Naive thymus-derived CD4-positive, alpha-beta T cell (primary cell): ENCODE measurements at regions of chr1 and their contacts with region 1.

Region 1: DNA sequence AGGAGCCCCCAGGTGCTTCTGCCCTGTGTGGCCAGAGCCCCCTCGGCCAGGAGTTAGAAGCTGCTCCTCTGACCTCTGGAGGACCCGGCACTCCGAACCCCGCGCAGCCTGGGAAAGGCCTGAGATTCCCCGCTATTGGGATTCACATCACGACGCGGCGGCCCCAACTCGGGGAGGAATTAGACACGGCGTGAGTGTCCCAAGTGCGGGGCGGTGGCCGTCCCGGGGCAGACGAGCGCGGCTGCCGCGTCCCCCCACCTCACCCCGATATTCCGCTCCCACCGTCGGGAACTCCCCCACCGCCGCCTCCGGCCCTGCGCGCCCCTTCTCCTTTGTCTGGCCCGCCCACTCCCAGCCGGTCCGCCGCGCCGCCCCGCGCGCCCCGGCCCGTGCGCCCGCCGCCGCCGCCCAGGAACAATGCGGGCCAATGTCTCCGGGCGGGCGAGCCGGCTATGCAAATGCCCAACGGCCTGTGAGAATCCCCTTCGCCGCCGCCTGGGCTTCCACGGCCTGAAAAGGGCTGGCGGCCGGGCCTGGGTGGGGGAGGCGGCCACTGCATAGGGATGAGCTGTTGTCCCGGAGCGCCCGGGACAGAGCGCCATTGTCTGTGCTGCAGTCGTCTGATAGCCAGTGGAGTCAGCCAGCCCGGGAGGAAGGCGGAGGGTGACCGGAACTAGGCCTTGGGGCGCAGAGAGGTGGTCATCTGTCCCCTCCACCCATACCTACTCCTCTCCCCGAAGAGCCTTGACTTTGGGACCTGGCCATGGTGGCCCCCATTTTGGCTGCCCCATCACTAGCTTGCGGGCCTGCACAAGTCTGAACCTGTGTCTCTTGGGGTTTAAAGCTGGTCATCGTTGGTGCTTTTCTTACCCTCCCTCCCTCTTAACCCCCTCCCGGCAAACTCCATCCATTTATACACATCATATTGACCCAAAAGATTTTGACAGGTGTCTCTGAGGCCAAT is 19.4 kb downstream of the RHBG start:
- DNase-seq: no peak
- ATAC-seq: no peak
- H3K4me3 ChIP-seq: no peak overlapping the region
- H3K4me3 Mint-ChIP-seq: peak overlapping the region in 1 of 10 donors; percentile 48
- H3K27ac ChIP-seq: no peak overlapping the region
- H3K27ac Mint-ChIP-seq: no peak overlapping the region
- H3K4me1 ChIP-seq: peaks cover 6 to 8% of the 10 kb centered on the region in 2 donors
- H3K4me1 Mint-ChIP-seq: peaks cover 5 to 7% (median 6%) of the 10 kb centered on the region in 7 donors
- H3K27me3 ChIP-seq: peaks cover 0 to 3% of the 10 kb centered on the region in 2 donors
- H3K27me3 Mint-ChIP-seq: peaks cover 15 to 44% (median 26%) of the 10 kb centered on the region in 5 donors

Region 2: GRCh38 chr1:156245451-156246232 is 142.8 kb before region 1 on chr1:
- CTCF ChIA-PET with region 1: no interaction called
- POLR2A ChIA-PET with region 1: no interaction called
- intact Hi-C with region 1: no loop called
- DNase-seq: peak in 7 of 9 donors; percentile 26 to 45 (median 31)
- ATAC-seq: peak; percentile 67
- H3K4me3 ChIP-seq: peak overlapping the region; percentile 55
- H3K4me3 Mint-ChIP-seq: peak overlapping the region; percentile 78 to 90 (median 86)
- H3K27ac ChIP-seq: no peak overlapping the region
- H3K27ac Mint-ChIP-seq: peak overlapping the region; percentile 25 to 73 (median 56)
- H3K4me1 ChIP-seq: peaks cover 8 to 10% of the 10 kb centered on the region in 2 donors
- H3K4me1 Mint-ChIP-seq: peaks cover 0 to 24% (median 18%) of the 10 kb centered on the region in 7 donors
- H3K27me3 ChIP-seq: no peaks in the 10 kb centered on the region
- H3K27me3 Mint-ChIP-seq: peaks cover 0 to 6% (median 0%) of the 10 kb centered on the region in 5 donors

Region 3: GRCh38 chr1:156409439-156409838 is 21.0 kb after region 1 on chr1:
- CTCF ChIA-PET with region 1: interaction called, 6 read pairs
- POLR2A ChIA-PET with region 1: no interaction called
- intact Hi-C with region 1: loop called in 1 of 2 experiments (anchors 2 kb)
- DNase-seq: no peak
- ATAC-seq: no peak
- H3K4me3 ChIP-seq: no peak overlapping the region
- H3K4me3 Mint-ChIP-seq: no peak overlapping the region
- H3K27ac ChIP-seq: no peak overlapping the region
- H3K27ac Mint-ChIP-seq: no peak overlapping the region
- H3K4me1 ChIP-seq: no peaks in the 10 kb centered on the region
- H3K4me1 Mint-ChIP-seq: no peaks in the 10 kb centered on the region
- H3K27me3 ChIP-seq: no peaks in the 10 kb centered on the region
- H3K27me3 Mint-ChIP-seq: peaks cover 53 to 66% (median 58%) of the 10 kb centered on the region in 5 donors

Region 4: GRCh38 chr1:156471496-156472490 is 83.3 kb after region 1 on chr1:
- CTCF ChIA-PET with region 1: no interaction called
- POLR2A ChIA-PET with region 1: no interaction called
- intact Hi-C with region 1: no loop called
- DNase-seq: no peak
- ATAC-seq: no peak
- H3K4me3 ChIP-seq: no peak overlapping the region
- H3K4me3 Mint-ChIP-seq: no peak overlapping the region
- H3K27ac ChIP-seq: no peak overlapping the region
- H3K27ac Mint-ChIP-seq: peak overlapping the region in 5 of 9 donors; percentile 8 to 63 (median 46)
- H3K4me1 ChIP-seq: no peaks in the 10 kb centered on the region
- H3K4me1 Mint-ChIP-seq: peaks cover 0 to 13% (median 0%) of the 10 kb centered on the region in 7 donors
- H3K27me3 ChIP-seq: no peaks in the 10 kb centered on the region
- H3K27me3 Mint-ChIP-seq: no peaks in the 10 kb centered on the region